GM12878 (cell line): ENCODE measurements at regions of chr6 and their contacts with region 1.

Region 1: DNA sequence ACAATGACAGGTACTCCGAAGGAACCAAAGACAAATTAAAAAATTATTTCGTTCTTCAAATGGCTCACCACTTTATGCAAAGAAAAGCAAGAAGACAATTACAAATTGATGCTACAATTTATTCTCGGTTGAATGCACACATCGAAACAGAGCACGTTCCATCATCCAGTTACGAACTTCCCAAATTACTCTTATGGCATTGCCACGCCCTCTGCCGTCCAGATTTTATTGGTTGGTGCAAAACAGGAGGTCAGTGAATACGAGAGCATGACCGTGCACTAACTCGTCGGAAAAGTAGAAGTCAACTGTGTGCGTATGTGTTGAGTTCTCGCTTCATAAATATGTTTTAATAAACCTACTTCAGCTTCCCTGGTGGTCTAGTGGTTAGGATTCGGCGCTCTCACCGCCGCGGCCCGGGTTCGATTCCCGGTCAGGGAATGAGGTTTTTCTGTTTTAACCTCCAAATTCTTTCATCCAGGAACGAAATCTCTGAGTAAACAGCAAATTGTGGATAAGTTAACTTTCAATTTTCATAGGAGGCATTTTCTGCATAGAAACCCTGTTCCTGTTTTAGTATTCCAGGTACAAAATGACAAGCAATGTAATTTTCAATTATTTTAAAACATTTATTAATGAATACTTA is 23.2 kb downstream of the ZNF311 start:
- DNase-seq: peak; percentile 79
- ATAC-seq: peak; percentile 77
- H3K4me3 ChIP-seq: peak overlapping the region; percentile 100
- H3K27ac ChIP-seq: no peak overlapping the region
- H3K4me1 ChIP-seq: peaks cover 6% of the 10 kb centered on the region; the same call in 1 of the 2 replicates
- H3K27me3 ChIP-seq: no peaks in the 10 kb centered on the region
- CTCF ChIP-seq: no peak; a peak in 1 of 6 replicates
- EP300 ChIP-seq: peak in 1 of 2 experiments; percentile 80; a peak in 1 of 4 replicates
- POLR2A ChIP-seq: no peak
- RAD21 ChIP-seq: no peak

Region 2: GRCh38 chr6:28953039-28953584 is 28.8 kb before region 1 on chr6:
- CTCF ChIA-PET with region 1: no interaction called
- POLR2A ChIA-PET with region 1: no interaction called
- RAD21 ChIA-PET with region 1: no interaction called
- SMC1A ChIA-PET with region 1: no interaction called
- in situ Hi-C with region 1: no loop called
- intact Hi-C with region 1: loop called (anchors 2 kb)
- DNase-seq: peak; percentile 56
- ATAC-seq: peak; percentile 92
- H3K4me3 ChIP-seq: peak overlapping the region; percentile 72
- H3K27ac ChIP-seq: no peak overlapping the region
- H3K4me1 ChIP-seq: no peaks in the 10 kb centered on the region
- H3K27me3 ChIP-seq: no peaks in the 10 kb centered on the region
- CTCF ChIP-seq: no peak
- EP300 ChIP-seq: peak in 1 of 2 experiments; percentile 78; a peak in 1 of 4 replicates
- POLR2A ChIP-seq: no peak
- RAD21 ChIP-seq: no peak

Region 3: DNA sequence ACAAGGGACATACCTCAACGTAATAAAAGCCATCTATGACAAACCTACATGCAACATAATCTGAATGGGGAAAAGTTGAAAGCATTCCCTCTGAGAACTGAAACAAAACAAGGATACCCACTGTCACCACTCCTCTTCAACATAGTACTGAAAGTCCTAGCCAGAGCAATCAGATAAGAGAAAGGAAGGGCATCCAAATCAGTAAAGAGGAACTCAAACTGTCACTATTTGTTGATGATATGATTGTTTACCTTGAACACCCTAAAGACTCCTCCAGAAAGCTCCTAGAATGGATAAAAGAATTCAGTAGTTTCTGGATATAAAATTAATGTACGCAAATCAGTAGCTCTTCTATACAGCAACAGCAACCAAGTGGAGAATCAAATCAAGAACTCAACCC is 16.2 kb before region 1 on chr6:
- CTCF ChIA-PET with region 1: no interaction called
- POLR2A ChIA-PET with region 1: no interaction called
- RAD21 ChIA-PET with region 1: no interaction called
- SMC1A ChIA-PET with region 1: no interaction called
- in situ Hi-C with region 1: no loop called
- intact Hi-C with region 1: no loop called
- DNase-seq: no peak
- ATAC-seq: no peak
- H3K4me3 ChIP-seq: no peak overlapping the region
- H3K27ac ChIP-seq: no peak overlapping the region
- H3K4me1 ChIP-seq: no peaks in the 10 kb centered on the region
- H3K27me3 ChIP-seq: no peaks in the 10 kb centered on the region
- CTCF ChIP-seq: no peak
- EP300 ChIP-seq: no peak
- POLR2A ChIP-seq: no peak
- RAD21 ChIP-seq: no peak

Region 4: DNA sequence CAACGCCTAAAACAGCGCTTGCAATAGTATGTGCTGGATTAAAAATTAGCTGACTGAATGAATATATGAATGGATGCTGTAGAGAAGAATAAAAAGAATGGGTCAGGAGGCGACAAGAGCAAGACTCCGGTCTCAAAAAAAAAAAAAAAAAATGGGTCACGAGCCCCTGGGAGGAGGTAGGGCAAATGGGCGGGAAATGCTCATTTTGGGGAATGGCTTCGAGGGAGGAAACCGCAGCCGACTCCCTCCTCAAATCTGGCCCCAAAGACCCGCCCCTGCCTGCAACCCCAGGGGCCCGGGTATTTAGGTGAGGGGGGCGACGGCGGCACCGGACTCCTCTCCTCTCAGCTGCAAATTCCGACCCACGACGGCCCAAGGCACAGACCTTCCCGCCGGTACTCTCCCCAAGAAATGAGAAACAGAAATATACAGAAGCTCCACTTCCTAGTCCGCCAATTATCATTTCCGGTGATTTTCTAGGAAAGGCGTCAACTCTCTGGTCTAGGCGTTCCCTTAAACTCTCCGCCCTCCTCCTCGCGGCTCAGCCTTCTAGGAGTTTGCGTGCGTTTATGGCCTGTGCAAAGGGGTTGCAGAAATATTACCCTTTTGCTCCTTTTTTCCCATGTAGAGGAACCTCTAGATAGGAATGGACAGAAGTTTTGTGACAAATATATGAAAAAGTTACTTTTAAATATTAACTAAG is 23.4 kb after region 1 on chr6 and contains the start of gene ZNF311:
- CTCF ChIA-PET with region 1: no interaction called
- POLR2A ChIA-PET with region 1: no interaction called
- RAD21 ChIA-PET with region 1: no interaction called
- SMC1A ChIA-PET with region 1: no interaction called
- in situ Hi-C with region 1: no loop called
- intact Hi-C with region 1: no loop called
- DNase-seq: no peak
- ATAC-seq: no peak
- H3K4me3 ChIP-seq: no peak within 1 kb of the TSS
- H3K27ac ChIP-seq: no peak within 1 kb of the TSS
- H3K4me1 ChIP-seq: no peaks in the 10 kb centered on the region
- H3K27me3 ChIP-seq: peaks cover 0 to 7% of the 10 kb centered on the region in 2 experiments; a peak in 2 of 4 replicates
- CTCF ChIP-seq: no peak
- EP300 ChIP-seq: no peak
- POLR2A ChIP-seq: no peak
- RAD21 ChIP-seq: no peak
- polyA plus RNA-seq, gene ZNF311: not detected

Region 5: GRCh38 chr6:29016559-29017427 is 34.8 kb after region 1 on chr6:
- CTCF ChIA-PET with region 1: interaction called, 3 read pairs
- POLR2A ChIA-PET with region 1: no interaction called
- RAD21 ChIA-PET with region 1: interaction called, 4 read pairs
- SMC1A ChIA-PET with region 1: no interaction called
- in situ Hi-C with region 1: no loop called
- intact Hi-C with region 1: loop called (anchors 1 kb)
- DNase-seq: peak; percentile 56
- ATAC-seq: peak; percentile 97
- H3K4me3 ChIP-seq: peak overlapping the region; percentile 53
- H3K27ac ChIP-seq: no peak overlapping the region
- H3K4me1 ChIP-seq: no peaks in the 10 kb centered on the region
- H3K27me3 ChIP-seq: no peaks in the 10 kb centered on the region; a peak in 2 of 4 replicates
- CTCF ChIP-seq: peak; percentile 76 to 89 (median 78)
- EP300 ChIP-seq: no peak
- POLR2A ChIP-seq: no peak
- RAD21 ChIP-seq: peak; percentile 75

Region 6: DNA sequence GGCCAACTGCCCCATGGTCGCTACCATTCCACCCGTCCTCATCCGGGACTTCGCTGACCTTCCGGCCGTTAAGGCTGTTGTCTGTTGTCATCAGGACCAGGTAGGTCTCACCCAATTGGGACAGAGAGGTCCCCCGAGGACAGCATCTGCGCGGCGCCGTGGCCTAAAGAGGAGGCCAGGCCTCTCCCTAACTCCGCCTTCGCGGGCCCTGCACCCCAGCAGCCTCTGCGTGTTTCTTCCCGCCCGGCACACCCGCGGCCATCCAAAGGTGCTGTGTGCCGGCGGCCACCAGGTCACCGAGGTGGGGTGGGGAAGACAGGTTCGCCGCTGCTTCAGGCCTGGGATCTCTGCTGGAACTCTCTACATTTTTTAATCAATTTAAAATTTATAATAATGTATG is 54.0 kb after region 1 on chr6:
- CTCF ChIA-PET with region 1: no interaction called
- POLR2A ChIA-PET with region 1: no interaction called
- RAD21 ChIA-PET with region 1: no interaction called
- SMC1A ChIA-PET with region 1: no interaction called
- in situ Hi-C with region 1: no loop called
- intact Hi-C with region 1: no loop called
- DNase-seq: no peak
- ATAC-seq: no peak
- H3K4me3 ChIP-seq: no peak overlapping the region
- H3K27ac ChIP-seq: no peak overlapping the region
- H3K4me1 ChIP-seq: no peaks in the 10 kb centered on the region
- H3K27me3 ChIP-seq: no peaks in the 10 kb centered on the region
- CTCF ChIP-seq: no peak
- EP300 ChIP-seq: no peak
- POLR2A ChIP-seq: no peak
- RAD21 ChIP-seq: no peak